ENCODE measurements at regions of chr12 and their contacts with region 1.

Region 1: GRCh38 chr12:120317224-120318105 is 10.1 kb downstream of the PLA2G1B start:
- DNase-seq: peak; percentile 100
- H3K4me3 ChIP-seq: peak overlapping the region; percentile 42 to 65
- H3K4me3 Mint-ChIP-seq: peak overlapping the region; percentile 87 to 95 (median 92)
- H3K27ac ChIP-seq: peak overlapping the region; percentile 81
- H3K27ac Mint-ChIP-seq: peak overlapping the region; percentile 90 to 99 (median 98)
- H3K4me1 ChIP-seq: peaks cover 10% of the 10 kb centered on the region
- H3K4me1 Mint-ChIP-seq: peaks cover 11 to 16% (median 14%) of the 10 kb centered on the region in 4 donors
- H3K27me3 ChIP-seq: no peaks in the 10 kb centered on the region
- H3K27me3 Mint-ChIP-seq: no peaks in the 10 kb centered on the region

Region 2: DNA sequence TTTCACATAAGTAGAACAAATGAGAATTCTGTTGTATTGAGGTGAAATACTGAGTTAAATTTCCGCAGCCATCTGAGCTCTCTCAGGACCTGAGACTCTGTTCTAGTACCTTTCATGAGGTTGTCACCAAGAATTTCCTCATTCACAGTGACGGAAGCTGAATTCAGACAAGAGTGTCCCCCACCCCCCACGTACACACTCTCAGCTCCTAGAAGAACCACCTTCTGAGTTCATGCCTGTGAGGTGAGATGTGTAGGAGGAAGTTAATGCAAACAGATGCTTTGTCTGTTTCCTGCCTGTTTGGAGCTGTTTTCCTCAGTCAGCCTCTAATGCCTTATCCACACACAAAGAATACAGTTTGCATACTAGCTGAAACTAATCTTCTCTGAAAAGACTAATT is 310.2 kb before region 1 on chr12:
- CTCF ChIA-PET with region 1: no interaction called
- POLR2A ChIA-PET with region 1: no interaction called
- intact Hi-C with region 1: no loop called
- DNase-seq: peak; percentile 72 to 91 (median 76)
- H3K4me3 ChIP-seq: no peak overlapping the region
- H3K4me3 Mint-ChIP-seq: peak overlapping the region; percentile 15 to 70 (median 54)
- H3K27ac ChIP-seq: peak overlapping the region; percentile 71
- H3K27ac Mint-ChIP-seq: peak overlapping the region; percentile 92 to 96 (median 94)
- H3K4me1 ChIP-seq: peaks cover 57% of the 10 kb centered on the region
- H3K4me1 Mint-ChIP-seq: peaks cover 43 to 68% (median 52%) of the 10 kb centered on the region in 4 donors
- H3K27me3 ChIP-seq: no peaks in the 10 kb centered on the region
- H3K27me3 Mint-ChIP-seq: no peaks in the 10 kb centered on the region

Region 3: GRCh38 chr12:120283318-120283717 is 34.1 kb before region 1 on chr12:
- CTCF ChIA-PET with region 1: no interaction called
- POLR2A ChIA-PET with region 1: no interaction called
- intact Hi-C with region 1: no loop called
- DNase-seq: no peak
- H3K4me3 ChIP-seq: no peak overlapping the region
- H3K4me3 Mint-ChIP-seq: no peak overlapping the region
- H3K27ac ChIP-seq: no peak overlapping the region
- H3K27ac Mint-ChIP-seq: no peak overlapping the region
- H3K4me1 ChIP-seq: no peaks in the 10 kb centered on the region
- H3K4me1 Mint-ChIP-seq: peaks cover 0 to 4% (median under 1%) of the 10 kb centered on the region in 4 donors
- H3K27me3 ChIP-seq: no peaks in the 10 kb centered on the region
- H3K27me3 Mint-ChIP-seq: no peaks in the 10 kb centered on the region

Region 4: DNA sequence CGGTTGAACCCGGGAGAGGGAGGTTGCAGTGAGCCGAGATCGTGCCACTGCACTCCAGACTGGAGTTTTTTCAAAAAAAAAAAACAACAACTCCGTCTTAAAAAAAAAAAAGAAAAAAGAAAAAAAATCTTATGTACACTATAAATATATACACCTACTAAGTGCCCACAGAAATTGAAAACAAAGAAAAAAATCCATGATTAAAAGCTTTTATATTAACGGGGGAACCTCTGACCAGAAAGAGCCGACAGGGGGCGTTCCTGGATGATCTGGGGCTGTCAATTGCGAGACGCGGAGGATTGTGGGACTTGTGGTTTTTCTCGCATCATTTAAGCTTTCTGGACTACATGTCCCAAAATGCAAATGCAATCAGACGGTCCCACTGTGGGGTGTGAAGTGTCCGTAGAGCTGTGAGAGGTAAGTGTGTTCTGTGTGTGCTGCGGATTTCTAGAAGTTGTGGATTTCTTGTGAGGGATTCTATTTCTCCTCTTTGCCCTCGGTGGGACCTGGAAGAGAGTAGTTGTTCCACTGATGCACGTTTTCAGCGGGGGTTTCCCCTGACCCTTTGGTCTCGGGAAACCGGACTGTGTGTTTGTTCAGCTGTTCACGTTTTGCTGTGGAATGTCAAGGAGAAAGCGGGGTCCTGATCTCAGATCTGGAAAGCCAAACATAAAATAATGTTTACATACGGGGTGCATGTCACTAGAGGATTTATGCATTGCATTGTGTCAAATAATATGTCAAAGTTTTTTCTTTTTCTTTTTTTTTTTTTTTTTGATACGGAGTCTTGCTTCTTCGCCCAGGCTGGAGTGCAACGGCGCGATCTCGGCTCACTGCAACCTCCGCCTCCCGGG is 15.3 kb before region 1 on chr12 and contains the start of gene SIRT4:
- CTCF ChIA-PET with region 1: interaction called, 69 read pairs
- POLR2A ChIA-PET with region 1: interaction called, 45 read pairs
- intact Hi-C with region 1: loop called (anchors 1 kb)
- DNase-seq: peak; percentile 87 to 91 (median 88)
- H3K4me3 ChIP-seq: peak within 1 kb of the TSS; percentile 65 to 94
- H3K4me3 Mint-ChIP-seq: peak within 1 kb of the TSS; percentile 93 to 98 (median 96)
- H3K27ac ChIP-seq: peak within 1 kb of the TSS; percentile 62
- H3K27ac Mint-ChIP-seq: peak within 1 kb of the TSS; percentile 77 to 95 (median 93)
- H3K4me1 ChIP-seq: peaks cover 3% of the 10 kb centered on the region
- H3K4me1 Mint-ChIP-seq: peaks cover 6 to 10% (median 8%) of the 10 kb centered on the region in 4 donors
- H3K27me3 ChIP-seq: no peaks in the 10 kb centered on the region
- H3K27me3 Mint-ChIP-seq: no peaks in the 10 kb centered on the region
- total RNA-seq, gene SIRT4: 4.9 to 5.9 TPM

Region 5: DNA sequence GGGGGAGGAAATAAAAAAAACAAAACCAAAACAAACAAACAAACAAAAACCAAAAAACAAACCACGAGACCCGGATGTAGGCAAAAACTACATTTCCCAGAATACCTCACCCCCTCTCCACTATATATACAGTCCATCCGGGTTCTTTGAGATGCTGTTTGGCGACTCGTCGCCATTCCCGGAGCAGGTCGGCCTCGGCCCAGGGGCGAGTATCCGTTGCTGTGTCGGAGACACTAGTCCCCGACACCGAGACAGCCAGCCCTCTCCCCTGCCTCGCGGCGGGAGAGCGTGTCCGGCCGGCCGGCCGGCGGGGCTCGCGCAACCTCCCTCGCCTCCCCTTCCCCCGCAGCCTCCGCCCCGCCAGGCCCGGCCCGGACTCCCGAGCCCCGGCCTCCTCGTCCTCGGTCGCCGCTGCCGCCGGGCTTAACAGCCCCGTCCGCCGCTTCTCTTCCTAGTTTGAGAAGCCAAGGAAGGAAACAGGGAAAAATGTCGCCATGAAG is 216.8 kb after region 1 on chr12 and contains the start of gene RNF10:
- CTCF ChIA-PET with region 1: no interaction called
- POLR2A ChIA-PET with region 1: interaction called, 3 read pairs
- intact Hi-C with region 1: loop called (anchors 1 kb)
- DNase-seq: peak; percentile 85 to 87 (median 86)
- H3K4me3 ChIP-seq: peak within 1 kb of the TSS; percentile 62 to 88
- H3K4me3 Mint-ChIP-seq: peak within 1 kb of the TSS; percentile 92 to 97 (median 94)
- H3K27ac ChIP-seq: peak within 1 kb of the TSS; percentile 94
- H3K27ac Mint-ChIP-seq: peak within 1 kb of the TSS; percentile 95 to 98 (median 96)
- H3K4me1 ChIP-seq: peaks cover 59% of the 10 kb centered on the region
- H3K4me1 Mint-ChIP-seq: peaks cover 43 to 68% (median 49%) of the 10 kb centered on the region in 4 donors
- H3K27me3 ChIP-seq: no peaks in the 10 kb centered on the region
- H3K27me3 Mint-ChIP-seq: no peaks in the 10 kb centered on the region
- total RNA-seq, gene RNF10: 244 to 249 TPM

Measured in CD4-positive, alpha-beta memory T cell (primary cell).